ENCODE measurements at regions of chr7 and their contacts with region 1.

Region 1: DNA sequence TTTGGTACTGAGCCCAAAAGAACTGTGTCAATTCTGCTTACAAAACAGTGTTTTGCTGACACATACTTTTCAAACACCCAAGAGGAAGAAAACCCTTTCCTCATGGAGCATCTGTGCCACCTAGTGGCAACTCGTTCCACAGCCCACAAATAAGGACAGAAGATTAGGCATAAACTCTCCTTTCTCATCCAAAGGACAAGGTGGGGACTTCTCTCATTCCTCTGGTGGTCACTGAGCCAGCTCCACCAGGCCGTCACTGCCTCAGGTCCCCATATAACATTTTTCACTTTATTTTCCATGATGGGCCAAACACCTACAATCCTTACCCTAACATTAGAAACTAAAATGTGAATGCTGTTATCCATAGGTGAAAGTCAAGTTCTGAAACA is 76.9 kb downstream of the RNF216 start:
- DNase-seq: peak in 1 of 2 donors; percentile 93
- H3K4me3 ChIP-seq: peak overlapping the region in 1 of 2 donors; percentile 23
- H3K27ac ChIP-seq: peak overlapping the region; percentile 58 to 60
- H3K4me1 ChIP-seq: peaks cover 11 to 21% of the 10 kb centered on the region in 2 donors
- H3K27me3 ChIP-seq: no peaks in the 10 kb centered on the region
- CTCF ChIP-seq: peak; percentile 89 to 93 (median 90)

Region 2: GRCh38 chr7:5665094-5666025 is 39.2 kb before region 1 on chr7:
- intact Hi-C with region 1: loop called (anchors 5 kb)
- DNase-seq: peak; percentile 23 to 88
- H3K4me3 ChIP-seq: no peak overlapping the region
- H3K27ac ChIP-seq: no peak overlapping the region
- H3K4me1 ChIP-seq: peaks cover 0 to 2% of the 10 kb centered on the region in 2 donors
- H3K27me3 ChIP-seq: no peaks in the 10 kb centered on the region
- CTCF ChIP-seq: peak; percentile 84 to 87 (median 84)